ENCODE measurements at regions of chr13 and their contacts with region 1.

Region 1: GRCh38 chr13:100674848-100675660 is 459 bp upstream of the TMTC4 start:
- DNase-seq: peak; percentile 100
- ATAC-seq: peak; percentile 95
- H3K4me3 Mint-ChIP-seq: peak overlapping the region; percentile 84
- H3K27ac Mint-ChIP-seq: peak overlapping the region; percentile 77
- H3K4me1 Mint-ChIP-seq: peaks cover 33% of the 10 kb centered on the region
- H3K27me3 Mint-ChIP-seq: peaks cover 15% of the 10 kb centered on the region

Region 2: GRCh38 chr13:100658363-100658762 is 16.7 kb before region 1 on chr13:
- CTCF ChIA-PET with region 1: interaction called, 10 read pairs
- POLR2A ChIA-PET with region 1: no interaction called
- DNase-seq: peak; percentile 65
- ATAC-seq: peak; percentile 86
- H3K4me3 Mint-ChIP-seq: peak overlapping the region; percentile 12
- H3K27ac Mint-ChIP-seq: peak overlapping the region; percentile 74
- H3K4me1 Mint-ChIP-seq: peaks cover 36% of the 10 kb centered on the region
- H3K27me3 Mint-ChIP-seq: no peaks in the 10 kb centered on the region

Measured in activated CD8-positive, alpha-beta T cell treated with anti-CD3 and anti-CD28 coated beads, Interleukin-2, amount 10 ng/mL, durations not matched to agents 7 days and 5 days (primary cell).